ENCODE measurements at regions of chr22 and their contacts with region 1.

Region 1: GRCh38 chr22:29343313-29343805 is 27.9 kb upstream of the RASL10A start:
- DNase-seq: no peak
- H3K4me3 ChIP-seq: no peak overlapping the region
- H3K27ac ChIP-seq: peak overlapping the region; percentile 47 to 80 (median 65)
- H3K4me1 ChIP-seq: peaks cover 22 to 44% (median 35%) of the 10 kb centered on the region in 4 donors
- H3K27me3 ChIP-seq: no peaks in the 10 kb centered on the region
- CTCF ChIP-seq: no peak
- EP300 ChIP-seq: no peak
- POLR2A ChIP-seq: no peak

Region 2: GRCh38 chr22:29245637-29246385 is 97.5 kb before region 1 on chr22:
- intact Hi-C with region 1: no loop called
- DNase-seq: no peak
- H3K4me3 ChIP-seq: no peak overlapping the region
- H3K27ac ChIP-seq: no peak overlapping the region
- H3K4me1 ChIP-seq: peaks cover 0 to 8% (median 1%) of the 10 kb centered on the region in 4 donors
- H3K27me3 ChIP-seq: no peaks in the 10 kb centered on the region
- CTCF ChIP-seq: peak; percentile 93 to 100 (median 94)
- EP300 ChIP-seq: no peak
- POLR2A ChIP-seq: no peak

Region 3: GRCh38 chr22:29313121-29313580 is 30.2 kb before region 1 on chr22:
- intact Hi-C with region 1: loop called (anchors 2 kb)
- DNase-seq: no peak
- H3K4me3 ChIP-seq: peak overlapping the region in 2 of 4 donors; percentile 7 to 21
- H3K27ac ChIP-seq: no peak overlapping the region
- H3K4me1 ChIP-seq: peaks cover 71 to 79% (median 76%) of the 10 kb centered on the region in 4 donors
- H3K27me3 ChIP-seq: peaks cover 0 to 38% (median 10%) of the 10 kb centered on the region in 4 donors
- CTCF ChIP-seq: peak; percentile 55 to 79 (median 63)
- EP300 ChIP-seq: no peak
- POLR2A ChIP-seq: no peak